ENCODE measurements at regions of chr18 and their contacts with region 1.

Region 1: DNA sequence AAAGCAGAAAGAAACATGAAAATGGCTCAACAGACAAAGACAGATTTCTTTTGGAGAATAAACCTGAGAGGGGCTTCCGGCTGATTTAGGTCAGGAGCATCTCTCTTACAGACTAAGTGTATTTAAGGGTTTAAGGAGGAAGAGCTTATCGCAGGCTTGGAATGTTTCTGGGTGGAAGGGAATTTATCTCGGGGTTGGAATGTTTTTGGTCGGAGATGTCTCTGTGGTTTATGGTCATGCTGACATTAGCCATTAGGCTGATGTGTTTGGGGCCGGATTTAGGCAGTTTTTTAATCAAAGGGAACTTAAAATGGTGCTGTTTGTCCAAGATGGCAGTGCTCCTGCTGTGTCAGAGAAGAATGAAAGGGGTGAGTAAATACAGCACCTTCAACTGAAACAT is 14.4 kb upstream of the PSMA8 start:
- DNase-seq: no peak
- ATAC-seq: no peak
- H3K4me3 ChIP-seq: no peak overlapping the region
- H3K4me3 Mint-ChIP-seq: no peak overlapping the region
- H3K27ac ChIP-seq: no peak overlapping the region
- H3K27ac Mint-ChIP-seq: no peak overlapping the region
- H3K4me1 ChIP-seq: peaks cover 0 to 3% of the 10 kb centered on the region in 2 experiments
- H3K4me1 Mint-ChIP-seq: peaks cover 0 to 14% (median 2%) of the 10 kb centered on the region in 3 donors
- H3K27me3 ChIP-seq: peaks cover 0 to 19% of the 10 kb centered on the region in 2 experiments
- H3K27me3 Mint-ChIP-seq: peaks cover 6 to 9% of the 10 kb centered on the region in 2 donors

Region 2: GRCh38 chr18:24600076-24600654 is 1519.1 kb before region 1 on chr18:
- CTCF ChIA-PET with region 1: no interaction called
- POLR2A ChIA-PET with region 1: no interaction called
- DNase-seq: peak in 1 of 35 experiments; percentile 55
- ATAC-seq: no peak
- H3K4me3 ChIP-seq: no peak overlapping the region
- H3K4me3 Mint-ChIP-seq: no peak overlapping the region
- H3K27ac ChIP-seq: no peak overlapping the region
- H3K27ac Mint-ChIP-seq: no peak overlapping the region
- H3K4me1 ChIP-seq: no peaks in the 10 kb centered on the region
- H3K4me1 Mint-ChIP-seq: no peaks in the 10 kb centered on the region
- H3K27me3 ChIP-seq: no peaks in the 10 kb centered on the region
- H3K27me3 Mint-ChIP-seq: peaks cover 11 to 14% of the 10 kb centered on the region in 2 donors

Region 3: DNA sequence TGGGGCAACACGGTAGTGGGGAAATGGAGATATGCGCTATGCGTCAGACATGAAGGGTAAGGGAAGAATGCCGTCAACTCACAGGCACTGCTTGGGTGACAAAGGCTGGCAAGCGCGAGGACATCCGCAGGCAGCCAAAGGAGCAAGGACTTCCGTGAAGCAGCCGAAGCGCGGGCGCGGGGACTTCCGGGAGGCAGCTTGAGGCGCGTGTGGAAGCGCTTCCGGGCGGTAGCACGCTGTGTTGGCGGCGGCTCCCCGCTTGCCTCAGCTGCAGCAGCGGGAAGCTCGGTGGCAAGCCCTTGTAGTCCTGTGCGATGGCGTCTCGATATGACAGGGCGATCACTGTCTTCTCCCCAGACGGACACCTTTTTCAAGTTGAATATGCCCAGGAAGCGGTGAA is 14.4 kb after region 1 on chr18 and contains the start of gene PSMA8:
- CTCF ChIA-PET with region 1: interaction called in 1 of 2 experiments, 11 read pairs
- POLR2A ChIA-PET with region 1: no interaction called
- DNase-seq: peak; percentile 20 to 76 (median 58)
- ATAC-seq: peak; percentile 79 to 94 (median 88)
- H3K4me3 ChIP-seq: peak within 1 kb of the TSS; percentile 39 to 44
- H3K4me3 Mint-ChIP-seq: peak within 1 kb of the TSS; percentile 77 to 83 (median 79)
- H3K27ac ChIP-seq: peak within 1 kb of the TSS; percentile 28
- H3K27ac Mint-ChIP-seq: peak within 1 kb of the TSS; percentile 85
- H3K4me1 ChIP-seq: peaks cover 0 to 3% of the 10 kb centered on the region in 2 experiments
- H3K4me1 Mint-ChIP-seq: peaks cover 0 to 2% (median 0%) of the 10 kb centered on the region in 3 donors
- H3K27me3 ChIP-seq: no peaks in the 10 kb centered on the region
- H3K27me3 Mint-ChIP-seq: no peaks in the 10 kb centered on the region
- total RNA-seq, gene PSMA8: 0.23 to 0.83 (median 0.35) TPM

Measured in T-cell (primary cell).